ENCODE measurements at regions of chr1 and their contacts with region 1.

Region 1: GRCh38 chr1:53196485-53197270 is at the start of gene CPT2:
- DNase-seq: peak; percentile 96
- H3K4me3 ChIP-seq: peak within 1 kb of the TSS; percentile 85 to 99 (median 94)
- H3K27ac ChIP-seq: peak within 1 kb of the TSS; percentile 95 to 100 (median 98)
- H3K4me1 ChIP-seq: peaks cover 23 to 32% (median 27%) of the 10 kb centered on the region in 4 donors
- H3K27me3 ChIP-seq: no peaks in the 10 kb centered on the region
- CTCF ChIP-seq: peak in 1 of 5 experiments; percentile 12
- EP300 ChIP-seq: no peak
- POLR2A ChIP-seq: peak; percentile 96
- total RNA-seq, gene CPT2: 27.3 to 84.8 (median 50.2) TPM

Region 2: DNA sequence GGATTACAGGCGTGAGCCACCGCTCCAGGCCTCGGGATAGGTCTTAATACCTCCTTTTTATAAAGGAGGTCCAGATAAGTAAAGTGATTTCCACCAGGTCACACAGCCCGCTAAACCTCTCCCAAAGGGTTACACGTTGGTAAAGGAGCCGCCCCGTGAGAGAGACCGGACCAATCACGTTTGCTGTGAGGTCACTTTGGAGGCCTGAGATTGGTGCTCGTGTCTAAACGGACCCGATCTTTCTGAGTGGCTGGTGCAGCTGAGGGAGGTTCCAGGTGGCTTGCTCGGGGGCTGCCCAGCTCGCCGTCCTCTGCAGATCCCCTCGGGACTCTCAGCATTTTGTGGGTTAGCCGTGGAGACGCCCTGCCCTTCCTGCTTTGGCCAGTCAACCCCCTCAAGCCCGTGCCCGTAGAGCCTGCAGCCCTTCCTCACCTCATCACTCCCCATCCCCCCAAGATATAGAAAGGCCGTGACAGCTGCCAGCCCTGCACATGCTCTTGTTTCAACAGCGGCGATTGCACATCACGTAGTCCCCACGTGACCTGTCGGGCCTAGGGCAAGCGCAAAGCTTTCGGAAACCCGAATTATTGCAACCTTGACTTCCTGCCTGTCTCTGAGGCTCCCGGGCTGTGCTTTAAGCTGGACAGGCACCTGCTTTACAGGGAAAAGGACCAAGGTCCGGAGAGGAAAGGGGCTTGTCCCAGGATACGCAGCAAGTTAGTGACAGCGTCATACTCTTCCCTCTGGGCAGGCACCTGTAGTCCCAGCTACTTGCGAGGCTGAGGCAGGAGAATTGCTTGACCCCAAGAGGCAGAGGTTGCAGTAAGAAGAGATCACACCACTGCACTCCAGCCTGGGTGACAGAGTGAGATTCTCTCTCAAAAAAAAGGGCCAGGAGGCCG is 493.5 kb before region 1 on chr1:
- in situ Hi-C with region 1: loop called in 1 of 4 experiments (anchors 25 kb)
- intact Hi-C with region 1: no loop called
- DNase-seq: peak; percentile 93
- H3K4me3 ChIP-seq: peak overlapping the region; percentile 0 to 54 (median 36)
- H3K27ac ChIP-seq: peak overlapping the region; percentile 86 to 90 (median 88)
- H3K4me1 ChIP-seq: peaks cover 4 to 48% (median 31%) of the 10 kb centered on the region in 4 donors
- H3K27me3 ChIP-seq: no peaks in the 10 kb centered on the region
- CTCF ChIP-seq: no peak
- EP300 ChIP-seq: no peak
- POLR2A ChIP-seq: peak; percentile 57

Region 3: DNA sequence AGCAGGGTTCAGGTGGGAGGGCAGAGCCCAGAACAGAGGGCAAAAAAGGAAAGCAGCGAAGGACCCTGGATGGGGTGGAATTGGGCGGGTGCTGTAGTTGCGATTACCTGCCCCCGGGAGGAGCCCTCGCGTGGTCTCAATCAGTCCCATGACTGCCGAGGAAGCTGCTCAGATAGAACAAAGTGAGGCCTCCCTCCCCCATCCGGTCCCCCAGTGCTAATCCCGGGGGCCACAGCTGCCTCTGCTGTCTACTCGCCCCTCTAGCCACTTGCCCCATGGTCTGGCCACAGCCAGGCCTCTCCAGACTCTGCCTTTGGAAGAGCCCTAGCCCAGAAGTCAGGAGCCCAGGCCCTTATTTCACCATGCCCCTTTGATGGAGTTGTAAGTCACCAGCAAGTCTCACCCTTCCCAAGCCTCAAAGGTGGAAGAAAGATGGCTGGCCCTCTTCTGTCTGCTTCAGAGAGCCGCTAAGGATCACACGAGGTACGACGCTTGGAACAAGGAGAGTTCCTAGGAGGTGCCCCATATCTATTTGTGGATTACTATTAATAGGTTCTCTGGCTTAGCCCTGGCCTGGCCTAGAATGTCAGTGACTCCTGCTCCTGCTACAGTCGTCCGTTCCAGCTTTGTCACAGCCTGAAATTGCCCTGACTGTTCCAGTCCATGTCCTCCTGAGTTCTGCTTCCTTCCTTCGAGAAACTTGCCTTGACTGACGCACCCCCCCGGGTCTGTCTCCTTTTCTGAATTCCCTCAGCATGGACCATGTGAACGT is 291.6 kb before region 1 on chr1:
- in situ Hi-C with region 1: loop called in 1 of 4 experiments (anchors 25 kb)
- intact Hi-C with region 1: no loop called
- DNase-seq: no peak
- H3K4me3 ChIP-seq: no peak overlapping the region
- H3K27ac ChIP-seq: no peak overlapping the region
- H3K4me1 ChIP-seq: peaks cover 0 to 7% (median 1%) of the 10 kb centered on the region in 4 donors
- H3K27me3 ChIP-seq: no peaks in the 10 kb centered on the region
- CTCF ChIP-seq: peak in 3 of 5 experiments; percentile 27 to 32 (median 30)
- EP300 ChIP-seq: no peak
- POLR2A ChIP-seq: no peak

Region 4: DNA sequence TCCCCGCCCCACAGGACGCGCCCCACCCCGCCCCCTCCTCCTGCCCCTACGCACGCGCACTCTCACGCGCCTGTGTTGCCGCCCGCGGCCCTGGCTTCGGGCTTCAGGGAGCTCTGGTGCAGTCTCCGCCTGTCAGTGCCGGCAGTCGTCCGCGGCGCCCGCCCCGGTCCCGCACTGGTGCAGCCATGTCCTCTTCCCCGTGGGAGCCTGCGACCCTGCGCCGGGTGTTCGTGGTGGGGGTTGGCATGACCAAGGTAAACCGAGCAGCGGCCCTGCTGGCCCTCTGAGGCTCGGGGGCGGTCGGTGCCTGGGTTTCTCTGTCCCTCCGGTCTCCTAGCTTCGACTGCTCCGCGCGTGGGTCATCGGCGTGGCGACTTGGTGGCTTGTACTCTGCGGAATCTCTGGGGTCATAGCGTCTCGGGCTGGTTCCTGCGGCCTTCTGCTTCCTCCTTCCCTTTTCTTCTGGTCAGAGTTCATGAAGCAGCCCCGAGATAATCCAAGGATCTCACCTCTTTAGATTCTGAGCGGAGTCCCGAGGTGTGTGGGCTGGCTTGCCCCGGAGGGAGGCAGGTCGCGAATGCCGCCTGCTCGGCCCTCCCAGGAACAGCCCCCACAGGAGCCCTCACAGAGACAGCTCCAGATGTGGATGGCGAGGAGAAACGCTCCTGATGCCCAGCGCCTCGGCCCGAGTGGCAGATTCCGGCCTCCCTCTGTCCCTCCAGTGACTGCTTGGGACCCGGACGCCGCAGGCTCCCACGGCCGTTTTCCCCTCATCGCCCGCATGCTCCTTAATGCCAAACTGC is 269.3 kb before region 1 on chr1 and contains the start of gene SCP2:
- in situ Hi-C with region 1: loop called in 2 of 4 experiments (anchors 25 kb)
- intact Hi-C with region 1: no loop called
- DNase-seq: peak; percentile 89
- H3K4me3 ChIP-seq: peak within 1 kb of the TSS; percentile 67 to 85 (median 75)
- H3K27ac ChIP-seq: peak within 1 kb of the TSS; percentile 77 to 86 (median 84)
- H3K4me1 ChIP-seq: peaks cover 5 to 27% (median 13%) of the 10 kb centered on the region in 4 donors
- H3K27me3 ChIP-seq: no peaks in the 10 kb centered on the region
- CTCF ChIP-seq: no peak
- EP300 ChIP-seq: no peak
- POLR2A ChIP-seq: peak; percentile 69
- total RNA-seq, gene SCP2: 114 to 311 (median 223) TPM

Measured in transverse colon (tissue), 4 donors.